Cardiac septum (tissue), 1 donor: ENCODE measurements at regions of chr10 and their contacts with region 1.

Region 1: DNA sequence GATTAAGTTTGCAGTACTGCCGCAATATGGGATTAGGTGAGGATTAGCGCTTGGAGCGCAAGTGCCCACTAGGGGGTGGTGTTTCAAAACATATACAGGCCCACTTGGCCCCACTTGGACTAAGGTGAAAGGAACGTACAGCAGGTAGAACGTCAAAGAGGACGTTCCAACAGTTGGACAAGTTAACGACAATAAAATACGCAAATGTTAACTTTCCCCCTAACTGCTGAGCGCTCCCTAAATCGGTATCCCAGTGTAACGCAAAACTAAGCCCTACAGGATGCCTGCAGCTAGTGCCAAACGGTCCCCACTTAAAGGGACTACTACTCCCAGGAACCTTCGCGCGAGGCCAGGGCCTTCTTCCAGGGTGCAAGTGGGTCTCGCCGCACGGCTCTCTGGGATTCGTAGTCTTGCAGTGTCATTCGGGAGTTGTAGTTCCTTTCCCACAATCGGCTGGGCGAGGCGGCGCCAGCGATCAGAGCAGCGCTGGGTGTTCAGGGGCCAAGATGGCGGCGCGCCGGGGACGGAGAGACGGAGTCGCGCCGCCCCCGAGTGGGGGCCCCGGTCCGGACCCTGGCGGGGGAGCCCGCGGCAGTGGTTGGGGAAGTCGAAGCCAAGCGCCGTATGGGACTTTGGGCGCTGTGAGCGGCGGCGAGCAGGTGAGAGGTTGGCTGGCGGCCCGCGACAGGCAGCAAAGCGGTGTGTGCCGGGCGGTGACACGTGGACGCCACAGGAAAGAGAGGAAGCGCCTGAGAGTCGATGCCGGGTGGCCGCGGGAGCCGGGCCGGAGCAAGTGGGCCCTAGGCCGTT is at the start of gene PPRC1:
- DNase-seq: peak; percentile 99
- total RNA-seq, gene PPRC1: 23.8 TPM

Region 2: DNA sequence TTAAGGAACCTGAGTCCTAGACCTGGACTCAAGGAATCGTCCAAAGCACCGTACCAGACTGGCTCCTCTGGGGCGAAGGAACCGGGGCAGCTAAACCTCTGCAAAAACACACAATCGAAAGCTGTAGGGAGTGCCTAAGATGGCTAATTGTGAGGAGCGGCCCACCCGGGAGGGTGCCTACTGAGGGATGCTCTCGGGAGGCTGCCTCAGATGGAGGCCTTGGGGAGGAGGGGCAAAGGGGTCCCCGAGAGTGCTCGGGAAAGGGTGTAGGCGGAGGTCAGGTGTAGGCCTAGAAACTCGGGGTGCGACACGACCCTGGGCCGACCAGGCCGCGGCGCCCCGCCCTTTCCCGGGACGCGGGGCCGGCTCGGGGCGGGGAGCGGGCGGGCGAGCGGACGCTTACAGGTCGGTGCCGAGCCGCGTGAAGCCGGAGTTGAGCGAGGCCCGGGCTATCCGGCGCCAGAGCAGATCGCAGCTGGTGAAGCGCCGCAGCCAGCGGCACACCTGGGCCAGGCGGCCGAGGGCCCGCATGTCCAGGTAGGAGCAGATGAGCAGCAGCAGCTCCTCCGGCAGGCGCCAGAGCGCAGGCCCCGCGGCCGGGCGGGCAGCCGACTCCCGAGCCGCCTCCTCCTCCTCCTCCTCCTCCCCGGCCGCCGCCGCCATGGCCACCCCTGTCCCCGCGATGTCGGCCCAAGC is 438.6 kb before region 1 on chr10:
- intact Hi-C with region 1: no loop called
- DNase-seq: peak; percentile 78

Region 3: DNA sequence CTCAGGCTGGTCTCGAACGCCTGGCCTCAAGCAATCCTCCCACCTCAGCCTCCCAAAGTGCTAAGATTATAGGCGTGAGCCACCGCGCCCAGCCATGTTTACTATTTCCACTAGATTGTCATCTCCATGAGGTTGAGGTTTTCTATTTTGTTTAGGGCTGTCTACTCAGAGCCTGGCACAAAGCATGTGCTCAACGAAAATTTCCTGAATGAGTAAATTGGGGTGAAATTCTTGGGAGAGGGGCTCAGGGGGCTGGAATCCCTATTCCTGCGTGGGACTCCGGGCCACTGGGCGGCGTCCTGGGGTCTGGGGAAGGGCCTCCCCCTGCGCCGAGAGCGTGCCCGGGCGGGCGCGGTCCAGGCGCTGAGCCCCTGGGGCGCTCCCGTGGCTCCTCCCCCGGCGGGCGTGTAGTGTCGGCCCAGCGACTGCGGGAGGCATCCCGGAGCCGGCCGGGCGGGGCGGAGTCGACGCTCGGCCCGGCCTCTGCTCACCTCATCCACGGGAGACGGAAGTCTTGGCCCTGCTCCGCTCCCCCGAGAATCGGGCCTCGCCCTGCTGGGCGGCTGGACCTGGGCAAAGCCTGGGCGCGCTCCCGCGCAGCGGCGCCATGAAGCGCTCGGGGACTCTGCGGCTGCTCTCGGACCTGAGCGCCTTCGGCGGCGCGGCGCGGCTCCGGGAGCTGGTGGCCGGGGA is 67.8 kb before region 1 on chr10 and contains the start of gene HPS6:
- intact Hi-C with region 1: loop called (anchors 5 kb)
- DNase-seq: peak; percentile 95
- total RNA-seq, gene HPS6: 12.1 TPM

Region 4: DNA sequence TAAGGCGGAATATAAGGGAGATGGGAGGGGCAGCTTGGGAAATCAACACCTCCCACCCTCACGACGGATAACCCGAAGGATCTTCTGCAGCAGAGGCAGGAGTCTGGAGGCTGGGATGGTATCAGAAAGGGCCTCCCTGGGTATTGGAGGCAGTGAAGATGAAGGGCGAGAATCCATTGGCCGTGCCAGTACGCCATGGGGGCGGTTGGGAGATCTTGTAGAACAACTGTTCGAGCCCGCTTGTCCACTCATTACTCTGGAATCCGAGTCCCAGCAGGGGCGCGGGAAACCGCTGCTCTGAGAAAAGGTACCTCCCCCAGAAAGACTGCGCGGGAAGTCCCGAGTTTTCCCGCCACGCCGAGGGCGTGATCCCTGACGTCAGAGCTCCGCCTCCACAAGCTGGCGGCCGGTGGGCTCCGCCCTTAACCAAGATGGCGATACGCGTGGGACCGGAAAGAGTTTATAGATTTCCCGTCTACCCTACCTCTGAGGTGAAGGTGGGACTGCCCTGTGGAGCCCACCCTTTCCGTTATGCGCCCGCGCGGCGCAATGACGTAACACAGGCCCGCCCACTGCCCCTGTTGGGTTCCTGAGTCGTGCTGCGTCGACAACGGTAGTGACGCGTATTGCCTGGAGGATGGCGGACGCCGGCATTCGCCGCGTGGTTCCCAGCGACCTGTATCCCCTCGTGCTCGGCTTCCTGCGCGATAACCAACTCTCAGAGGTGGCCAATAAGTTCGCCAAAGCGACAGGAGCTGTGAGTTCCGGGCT is 19.2 kb after region 1 on chr10 and contains the start of gene NOLC1:
- intact Hi-C with region 1: loop called (anchors 1 kb)
- DNase-seq: peak; percentile 99
- total RNA-seq, gene NOLC1: 26.2 TPM